RWPE1 (cell line): ENCODE measurements at regions of chr5 and their contacts with region 1.

Region 1: GRCh38 chr5:75395277-75395676 is 58.3 kb downstream of the HMGCR start:
- DNase-seq: no peak
- H3K27ac ChIP-seq: no peak overlapping the region
- CTCF ChIP-seq: no peak

Region 2: DNA sequence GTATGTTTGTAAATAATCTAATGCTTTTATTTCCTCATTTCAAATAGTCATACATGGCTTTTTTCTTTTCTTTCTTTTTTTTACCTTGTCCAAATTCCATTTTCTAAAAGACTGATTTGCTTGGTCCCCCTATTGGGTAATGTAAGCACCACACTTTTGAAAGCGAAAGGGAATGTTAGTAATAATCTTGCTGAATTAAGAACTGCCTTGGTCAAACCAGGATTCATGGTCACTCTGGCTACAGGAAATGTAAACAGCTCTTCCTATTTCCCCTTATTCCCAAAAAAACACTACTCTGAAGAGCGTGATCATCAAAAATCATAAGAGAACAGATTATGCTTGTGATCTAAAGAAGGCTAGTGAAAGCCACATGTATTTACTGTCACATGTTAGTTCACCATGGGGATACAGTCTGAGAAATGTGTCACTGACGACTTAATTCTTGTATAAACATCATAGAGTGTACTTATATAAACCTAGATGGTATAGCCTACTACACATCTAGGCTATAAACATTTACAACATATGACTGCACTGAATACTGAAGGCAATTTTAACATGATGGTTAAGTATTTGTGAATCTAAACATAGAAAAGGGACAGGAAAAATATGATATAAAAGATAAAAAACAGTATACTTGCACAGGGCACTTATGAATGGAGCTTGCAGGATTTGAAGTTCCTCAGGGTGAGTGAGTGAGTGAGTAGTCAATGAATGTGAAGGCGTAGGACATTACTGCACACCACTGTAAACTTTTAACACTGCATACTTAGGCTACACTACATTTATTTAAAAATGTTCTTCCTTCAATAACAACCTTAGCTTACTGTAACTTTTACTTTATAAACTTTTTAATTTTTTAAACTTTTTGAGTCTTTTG is 17.1 kb after region 1 on chr5:
- CTCF ChIA-PET with region 1: interaction called, 10 read pairs
- POLR2A ChIA-PET with region 1: no interaction called
- DNase-seq: no peak
- H3K27ac ChIP-seq: no peak overlapping the region
- CTCF ChIP-seq: no peak

Region 3: DNA sequence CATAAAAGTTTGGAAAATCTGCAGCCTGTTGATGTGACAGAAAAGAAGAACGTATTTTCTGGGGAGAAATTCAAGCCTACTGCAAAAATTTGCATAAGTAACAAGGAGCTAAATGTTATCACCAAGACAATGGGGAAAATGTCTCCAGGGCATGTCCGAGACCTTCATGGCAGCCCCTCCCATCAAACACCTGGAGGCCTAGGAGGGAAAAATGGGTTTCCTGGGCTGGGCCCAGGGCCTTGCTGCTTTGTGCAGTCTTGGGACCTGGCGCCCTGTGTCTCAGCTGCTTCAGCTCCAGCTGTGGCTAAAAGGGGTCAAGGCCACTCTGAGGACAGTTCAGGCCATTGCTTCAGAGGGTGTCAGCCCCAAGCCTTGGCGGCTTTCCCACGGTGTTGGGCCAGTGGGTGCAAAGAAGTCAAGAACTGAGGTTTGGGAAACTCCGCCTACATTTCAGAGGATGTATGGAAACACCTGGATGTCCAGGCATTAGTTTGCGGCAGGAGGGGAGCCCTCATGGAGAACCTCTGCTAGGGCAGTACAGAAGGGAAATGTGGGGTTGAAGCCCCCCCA is 103.0 kb after region 1 on chr5:
- CTCF ChIA-PET with region 1: no interaction called
- POLR2A ChIA-PET with region 1: no interaction called
- DNase-seq: no peak
- H3K27ac ChIP-seq: no peak overlapping the region
- CTCF ChIP-seq: no peak